ENCODE measurements at regions of chr19 and their contacts with region 1.

Region 1: GRCh38 chr19:1026189-1027019 is at the start of gene CNN2:
- DNase-seq: peak; percentile 74
- ATAC-seq: peak; percentile 72
- H3K4me3 Mint-ChIP-seq: peak within 1 kb of the TSS; percentile 98
- H3K27ac Mint-ChIP-seq: peak within 1 kb of the TSS; percentile 89
- H3K4me1 Mint-ChIP-seq: peaks cover 30% of the 10 kb centered on the region
- H3K27me3 Mint-ChIP-seq: no peaks in the 10 kb centered on the region
- total RNA-seq, gene CNN2: 417 to 455 TPM

Region 2: DNA sequence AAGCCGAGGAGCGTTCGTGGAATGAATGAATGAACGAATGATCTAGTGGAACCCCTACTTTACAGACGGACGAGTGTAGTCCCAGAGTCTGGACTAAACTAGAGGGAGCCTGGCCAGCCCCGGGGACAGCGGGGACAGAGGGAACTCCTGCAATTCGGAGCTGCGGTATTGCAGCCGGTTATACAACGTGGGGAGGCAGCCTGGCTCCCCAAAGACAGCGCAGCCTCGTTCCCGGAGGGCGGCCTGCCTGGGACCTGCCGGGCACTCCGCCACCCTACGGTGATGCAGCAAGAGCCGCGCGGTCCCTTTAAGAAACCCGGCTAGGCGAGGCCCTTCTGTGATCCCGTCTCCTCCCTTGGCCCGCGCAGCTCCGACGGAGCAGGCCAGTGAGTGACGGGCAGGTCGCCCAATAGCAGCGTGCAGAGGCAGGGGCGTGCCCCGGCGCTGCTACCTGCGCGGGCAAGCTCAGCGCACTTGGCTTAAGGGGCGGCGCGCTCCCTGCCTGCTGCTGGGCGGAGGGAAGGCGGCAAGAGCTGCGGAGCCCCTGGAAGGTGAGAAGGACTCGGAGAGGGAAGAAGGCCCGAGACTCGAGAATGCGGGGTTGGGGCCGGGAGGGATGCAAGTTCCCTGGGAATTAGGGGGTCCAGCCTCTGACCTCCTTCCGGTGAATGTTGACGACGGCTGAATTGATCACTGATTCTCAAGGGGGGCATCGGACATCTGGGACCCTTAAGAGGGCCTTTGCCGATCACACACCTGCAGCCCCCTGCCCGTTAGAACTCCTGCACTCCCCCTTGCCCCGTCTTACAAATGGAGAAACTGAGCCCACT is 13.5 kb after region 1 on chr19 and contains the start of gene ABCA7:
- CTCF ChIA-PET with region 1: interaction called, 4 read pairs
- POLR2A ChIA-PET with region 1: interaction called, 33 read pairs
- DNase-seq: peak; percentile 99
- ATAC-seq: peak; percentile 94
- H3K4me3 Mint-ChIP-seq: peak within 1 kb of the TSS; percentile 96
- H3K27ac Mint-ChIP-seq: peak within 1 kb of the TSS; percentile 84
- H3K4me1 Mint-ChIP-seq: peaks cover 64% of the 10 kb centered on the region
- H3K27me3 Mint-ChIP-seq: no peaks in the 10 kb centered on the region
- total RNA-seq, gene ABCA7: 76.6 to 77.5 TPM

Region 3: DNA sequence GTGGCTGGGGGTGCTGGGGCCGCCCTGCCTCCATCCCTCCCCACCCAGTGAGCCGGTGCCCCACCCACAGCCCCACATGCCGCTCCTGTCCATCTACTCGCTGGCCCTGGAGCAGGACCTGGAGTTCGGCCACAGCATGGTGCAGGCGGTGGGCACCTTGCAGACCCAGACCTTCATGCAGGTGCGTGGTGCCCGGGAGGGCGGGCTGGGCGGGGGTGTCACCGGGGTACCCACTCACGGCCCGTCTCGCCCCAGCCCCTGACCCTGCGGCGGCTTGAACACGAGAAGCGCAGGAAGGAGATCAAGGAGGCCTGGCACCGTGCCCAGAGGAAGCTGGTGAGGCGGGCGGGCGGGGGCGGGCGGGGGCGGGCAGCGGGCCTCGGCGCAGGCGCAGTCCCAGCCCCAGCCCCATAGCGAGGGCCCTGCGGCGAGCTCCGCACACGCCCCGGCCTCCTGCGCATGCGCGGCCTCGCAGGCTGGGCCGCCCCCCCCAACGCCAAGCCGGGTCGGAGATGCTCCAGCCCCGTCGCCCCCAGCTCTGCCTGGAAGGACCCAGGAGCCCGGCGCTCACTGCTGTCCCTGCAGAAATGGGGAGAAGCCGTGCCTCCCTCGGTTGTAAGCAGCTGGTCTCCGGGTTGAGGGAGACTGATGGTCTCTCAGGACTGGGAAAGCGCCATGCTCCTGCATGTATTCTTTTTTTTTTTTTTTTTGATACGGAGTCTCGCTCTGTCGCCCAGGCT is 48.3 kb after region 1 on chr19:
- CTCF ChIA-PET with region 1: interaction called, 3 read pairs
- POLR2A ChIA-PET with region 1: interaction called, 10 read pairs
- DNase-seq: peak; percentile 91
- ATAC-seq: peak; percentile 15
- H3K4me3 Mint-ChIP-seq: peak overlapping the region; percentile 69
- H3K27ac Mint-ChIP-seq: peak overlapping the region; percentile 93
- H3K4me1 Mint-ChIP-seq: peaks cover 54% of the 10 kb centered on the region
- H3K27me3 Mint-ChIP-seq: no peaks in the 10 kb centered on the region